HEK293 (cell line): ENCODE measurements at regions of chr4 and their contacts with region 1.

Region 1: DNA sequence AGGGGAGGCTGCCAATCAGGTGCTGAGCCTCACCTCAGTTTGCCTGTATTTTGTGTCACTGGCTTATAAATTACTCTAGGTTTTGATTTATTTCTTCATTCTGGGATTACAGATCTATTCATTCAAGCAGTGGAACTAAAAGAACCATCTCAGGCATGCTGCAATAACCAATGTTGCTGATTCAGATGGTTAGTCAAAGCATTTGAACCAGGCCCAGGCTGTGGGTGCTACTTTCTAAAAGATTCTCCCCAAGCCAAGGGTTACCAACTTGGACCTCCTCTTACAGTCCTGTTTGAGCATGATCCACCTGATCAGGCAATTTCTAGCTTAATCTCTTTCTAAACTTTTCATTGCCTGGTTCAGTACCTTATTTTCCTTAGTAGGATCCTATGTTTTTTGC is 67.2 kb downstream of the TMEM131L start:
- H3K4me3 ChIP-seq: no peak overlapping the region
- H3K27ac ChIP-seq: no peak overlapping the region
- H3K4me1 ChIP-seq: peaks cover 3% of the 10 kb centered on the region; the same call in 1 of the 2 replicates
- CTCF ChIP-seq: no peak

Region 2: GRCh38 chr4:153573881-153574802 is 40.8 kb after region 1 on chr4:
- CTCF ChIA-PET with region 1: interaction called, 11 read pairs
- POLR2A ChIA-PET with region 1: no interaction called
- H3K4me3 ChIP-seq: no peak overlapping the region
- H3K27ac ChIP-seq: no peak overlapping the region
- H3K4me1 ChIP-seq: 0 out of 2 replicates have a peak, but pooled peaks cover 5% of the 10 kb centered on the region
- CTCF ChIP-seq: peak; percentile 57; the same call in 1 of the 2 replicates